Caco-2 (cell line): ENCODE measurements at regions of chr17 and their contacts with region 1.

Region 1: GRCh38 chr17:47831003-47831933 is at the starts of genes LRRC46 and MRPL10:
- DNase-seq: peak; percentile 97 to 99
- H3K4me3 ChIP-seq: peak within 1 kb of the TSS; percentile 54
- H3K4me3 Mint-ChIP-seq: peak within 1 kb of the TSS; percentile 89
- H3K27ac Mint-ChIP-seq: peak within 1 kb of the TSS; percentile 84
- H3K4me1 ChIP-seq: peaks cover 9% of the 10 kb centered on the region
- H3K4me1 Mint-ChIP-seq: peaks cover 16% of the 10 kb centered on the region
- H3K27me3 ChIP-seq: no peaks in the 10 kb centered on the region
- H3K27me3 Mint-ChIP-seq: no peaks in the 10 kb centered on the region
- CTCF ChIP-seq: peak; percentile 54 to 80
- total RNA-seq, gene LRRC46: 1.4 and 2.3 TPM in 2 replicates
- total RNA-seq, gene MRPL10: 159 and 162 TPM in 2 replicates

Region 2: DNA sequence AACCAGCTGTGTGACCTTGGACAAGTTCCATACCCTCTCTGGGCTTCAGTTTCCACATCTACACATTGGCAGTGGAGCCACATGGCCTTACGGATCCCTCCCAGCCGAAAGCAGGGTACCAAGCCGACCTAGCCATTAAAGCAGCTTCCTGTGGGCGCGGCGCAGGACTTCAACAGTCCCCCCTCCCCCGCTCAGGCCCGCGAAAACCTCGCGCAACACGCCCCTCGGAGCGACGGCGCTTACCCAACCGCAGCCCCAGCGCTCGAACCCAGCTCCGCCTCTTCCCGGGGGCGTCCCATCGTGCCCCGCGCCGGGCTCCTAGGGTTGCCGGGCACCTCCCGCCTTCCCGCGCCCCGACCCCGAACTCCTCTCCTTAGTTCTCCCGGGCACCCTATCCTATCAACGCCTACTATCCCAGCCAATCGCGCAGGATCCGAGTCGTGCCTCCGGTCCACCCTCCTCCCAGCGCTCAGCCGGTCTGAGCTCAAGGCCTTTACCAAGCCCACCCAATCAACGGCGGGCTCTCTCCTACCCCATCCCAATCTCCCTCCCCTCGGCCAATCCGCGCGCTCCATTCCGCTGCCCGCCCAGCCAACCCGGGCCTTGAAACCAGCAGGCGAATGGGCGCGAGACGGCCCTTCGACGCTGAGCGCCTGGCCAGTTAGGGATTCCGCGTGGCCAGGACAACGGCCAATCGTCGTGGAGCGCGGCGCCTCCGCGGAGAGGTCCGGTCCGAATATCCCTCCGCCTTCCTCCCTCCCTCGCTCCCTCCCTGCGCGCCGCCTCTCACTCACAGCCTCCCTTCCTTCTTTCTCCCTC is 181.9 kb before region 1 on chr17 and contains the start of gene KPNB1:
- CTCF ChIA-PET with region 1: interaction called, 3 read pairs
- POLR2A ChIA-PET with region 1: interaction called, 14 read pairs
- intact Hi-C with region 1: no loop called
- DNase-seq: peak; percentile 100
- H3K4me3 ChIP-seq: peak within 1 kb of the TSS; percentile 92
- H3K4me3 Mint-ChIP-seq: peak within 1 kb of the TSS; percentile 87
- H3K27ac Mint-ChIP-seq: peak within 1 kb of the TSS; percentile 83
- H3K4me1 ChIP-seq: peaks cover 29% of the 10 kb centered on the region
- H3K4me1 Mint-ChIP-seq: peaks cover 27% of the 10 kb centered on the region
- H3K27me3 ChIP-seq: no peaks in the 10 kb centered on the region
- H3K27me3 Mint-ChIP-seq: no peaks in the 10 kb centered on the region
- CTCF ChIP-seq: peak in 1 of 2 experiments; percentile 2
- total RNA-seq, gene KPNB1: 967 and 1,072 TPM in 2 replicates

Region 3: DNA sequence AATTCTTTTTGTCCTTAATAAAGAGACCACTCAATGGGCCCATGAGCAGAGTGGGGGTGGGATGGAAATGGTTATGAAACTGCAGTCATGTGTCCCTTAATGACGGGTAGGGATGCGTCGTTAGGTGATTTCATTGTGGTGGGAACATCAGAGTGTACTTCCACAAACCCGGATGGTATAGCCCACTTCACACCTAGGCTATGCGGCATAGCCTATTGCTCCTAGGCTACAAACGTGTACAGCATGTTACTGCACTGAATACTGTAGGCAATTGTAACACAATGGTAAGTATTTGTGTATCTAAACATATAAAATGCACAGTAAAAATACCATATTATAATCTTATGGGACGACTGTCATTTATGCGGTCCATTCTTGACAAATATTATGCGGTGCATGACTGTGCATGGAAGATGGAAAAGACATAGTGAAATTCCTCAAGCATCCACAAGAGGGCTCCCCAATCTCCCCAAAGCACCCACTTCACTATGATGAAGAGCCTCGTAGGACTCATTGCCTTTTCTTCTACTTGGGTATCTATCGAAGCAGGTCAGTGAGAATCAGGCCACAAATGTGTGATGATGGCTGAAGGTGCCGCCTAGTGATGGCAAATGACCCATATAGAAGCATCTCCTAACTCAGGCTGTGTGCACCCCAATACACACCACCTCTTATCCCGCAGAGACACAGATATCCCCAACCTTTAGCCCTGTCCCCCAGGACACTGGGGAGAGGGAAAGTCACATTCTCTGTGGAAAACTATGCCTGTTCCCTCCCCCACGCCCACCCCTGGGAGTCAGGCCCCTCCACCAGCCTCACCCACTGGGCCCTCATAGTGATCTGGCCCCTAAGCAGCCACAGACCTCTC is 54.7 kb before region 1 on chr17:
- CTCF ChIA-PET with region 1: no interaction called
- POLR2A ChIA-PET with region 1: no interaction called
- intact Hi-C with region 1: loop called (anchors 1 kb)
- DNase-seq: peak; percentile 60 to 79
- H3K4me3 ChIP-seq: no peak overlapping the region
- H3K4me3 Mint-ChIP-seq: no peak overlapping the region
- H3K27ac Mint-ChIP-seq: no peak overlapping the region
- H3K4me1 ChIP-seq: no peaks in the 10 kb centered on the region
- H3K4me1 Mint-ChIP-seq: no peaks in the 10 kb centered on the region
- H3K27me3 ChIP-seq: no peaks in the 10 kb centered on the region
- H3K27me3 Mint-ChIP-seq: peaks cover 28% of the 10 kb centered on the region
- CTCF ChIP-seq: peak; percentile 94 to 99

Region 4: GRCh38 chr17:47850692-47851573 is 19.7 kb after region 1 on chr17 and contains the start of gene SP6:
- CTCF ChIA-PET with region 1: interaction called, 13 read pairs
- POLR2A ChIA-PET with region 1: interaction called, 11 read pairs
- intact Hi-C with region 1: no loop called
- DNase-seq: peak; percentile 98 to 99
- H3K4me3 ChIP-seq: peak within 1 kb of the TSS; percentile 56
- H3K4me3 Mint-ChIP-seq: peak within 1 kb of the TSS; percentile 90
- H3K27ac Mint-ChIP-seq: peak within 1 kb of the TSS; percentile 77
- H3K4me1 ChIP-seq: peaks cover 12% of the 10 kb centered on the region
- H3K4me1 Mint-ChIP-seq: peaks cover 23% of the 10 kb centered on the region
- H3K27me3 ChIP-seq: no peaks in the 10 kb centered on the region
- H3K27me3 Mint-ChIP-seq: peaks cover 12% of the 10 kb centered on the region
- CTCF ChIP-seq: peak; percentile 31 to 57
- total RNA-seq, gene SP6: 20.6 and 25.0 TPM in 2 replicates

Region 5: DNA sequence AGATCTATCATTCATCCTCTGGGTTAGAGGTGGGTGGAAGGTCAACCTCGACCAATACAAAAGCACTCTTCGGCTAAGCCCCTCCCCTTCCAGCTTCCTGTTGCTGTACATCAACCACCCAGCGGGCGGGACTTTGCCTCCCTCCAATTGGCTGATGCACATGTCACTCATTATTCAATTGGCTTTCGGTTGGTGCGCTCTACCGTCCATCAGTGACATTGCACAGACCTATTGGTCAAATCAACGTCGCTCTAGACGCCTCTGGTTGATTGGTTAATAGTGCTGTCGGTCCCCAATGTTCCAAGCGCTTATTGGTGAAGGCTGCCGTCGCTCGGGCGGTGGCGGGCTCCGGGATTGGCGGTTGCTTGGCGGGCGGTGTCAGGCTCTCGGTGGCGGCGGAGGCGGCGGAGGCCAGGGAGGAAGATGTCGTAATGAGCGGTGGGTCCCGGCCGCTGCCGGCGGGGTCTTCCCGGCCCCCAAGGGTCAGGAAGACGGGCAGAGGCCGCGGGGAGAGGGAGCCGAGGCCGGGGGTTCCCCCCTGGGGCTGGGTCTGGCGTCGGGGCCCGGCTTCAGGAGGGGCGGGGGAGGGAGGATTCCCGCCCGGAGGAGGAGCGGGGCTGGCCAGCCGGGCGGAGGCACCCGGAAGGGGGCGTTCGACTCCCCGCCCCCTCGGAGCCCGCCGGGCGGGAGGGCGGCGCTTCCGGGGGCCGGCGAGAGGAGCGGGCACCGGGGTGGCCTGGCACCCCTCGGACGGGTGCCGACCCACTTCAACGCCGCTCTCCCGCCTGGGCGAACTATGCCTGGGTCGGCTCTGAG is 64.8 kb after region 1 on chr17 and contains the start of gene SP2:
- CTCF ChIA-PET with region 1: interaction called, 11 read pairs
- POLR2A ChIA-PET with region 1: interaction called, 14 read pairs
- intact Hi-C with region 1: no loop called
- DNase-seq: peak; percentile 100
- H3K4me3 ChIP-seq: peak within 1 kb of the TSS; percentile 60
- H3K4me3 Mint-ChIP-seq: peak within 1 kb of the TSS; percentile 75
- H3K27ac Mint-ChIP-seq: peak within 1 kb of the TSS; percentile 91
- H3K4me1 ChIP-seq: peaks cover 10% of the 10 kb centered on the region
- H3K4me1 Mint-ChIP-seq: peaks cover 23% of the 10 kb centered on the region
- H3K27me3 ChIP-seq: no peaks in the 10 kb centered on the region
- H3K27me3 Mint-ChIP-seq: peaks cover 2% of the 10 kb centered on the region
- CTCF ChIP-seq: peak; percentile 22 to 39
- total RNA-seq, gene SP2: 24.8 and 25.2 TPM in 2 replicates

Region 6: GRCh38 chr17:48054238-48055185 is 223.2 kb after region 1 on chr17:
- CTCF ChIA-PET with region 1: no interaction called
- POLR2A ChIA-PET with region 1: interaction called, 10 read pairs
- intact Hi-C with region 1: no loop called
- DNase-seq: peak in 1 of 2 experiments; percentile 53
- H3K4me3 ChIP-seq: no peak overlapping the region
- H3K4me3 Mint-ChIP-seq: peak overlapping the region; percentile 18
- H3K27ac Mint-ChIP-seq: peak overlapping the region; percentile 97
- H3K4me1 ChIP-seq: peaks cover 30% of the 10 kb centered on the region
- H3K4me1 Mint-ChIP-seq: peaks cover 40% of the 10 kb centered on the region
- H3K27me3 ChIP-seq: no peaks in the 10 kb centered on the region
- H3K27me3 Mint-ChIP-seq: no peaks in the 10 kb centered on the region
- CTCF ChIP-seq: no peak

Region 7: DNA sequence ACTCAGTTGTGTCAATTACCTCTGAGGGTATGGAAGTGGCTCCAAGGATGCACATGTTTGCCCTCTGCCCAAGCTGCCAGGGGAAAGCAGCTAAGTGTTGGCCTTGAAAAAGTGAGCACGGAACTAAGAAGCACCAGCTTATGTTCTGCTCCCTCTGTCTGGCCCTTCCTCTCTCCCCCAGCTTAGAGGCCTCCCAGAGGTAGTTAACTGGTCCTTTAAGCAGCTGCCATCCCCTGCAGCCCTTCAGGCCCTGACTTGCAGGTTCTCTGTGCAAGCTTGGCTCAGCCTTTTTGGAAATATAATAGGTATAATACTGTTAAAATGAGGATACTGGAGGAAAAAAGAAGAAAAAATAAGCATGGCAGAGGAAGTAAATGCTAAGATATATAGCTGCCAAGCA is 1070.0 kb after region 1 on chr17:
- CTCF ChIA-PET with region 1: no interaction called
- POLR2A ChIA-PET with region 1: interaction called, 10 read pairs
- intact Hi-C with region 1: no loop called
- DNase-seq: no peak
- H3K4me3 ChIP-seq: no peak overlapping the region
- H3K4me3 Mint-ChIP-seq: no peak overlapping the region
- H3K27ac Mint-ChIP-seq: no peak overlapping the region
- H3K4me1 ChIP-seq: peaks cover 3% of the 10 kb centered on the region
- H3K4me1 Mint-ChIP-seq: peaks cover 13% of the 10 kb centered on the region
- H3K27me3 ChIP-seq: no peaks in the 10 kb centered on the region
- H3K27me3 Mint-ChIP-seq: no peaks in the 10 kb centered on the region
- CTCF ChIP-seq: no peak